Activated CD4-positive, alpha-beta memory T cell treated with anti-CD3 and anti-CD28 coated beads for 36 hours (primary cell): ENCODE measurements at regions of chr2 and their contacts with region 1.

Region 1: GRCh38 chr2:232327105-232328041 is 51.2 kb upstream of the ALPP start:
- DNase-seq: peak; percentile 90
- H3K4me3 Mint-ChIP-seq: no peak overlapping the region
- H3K27ac Mint-ChIP-seq: no peak overlapping the region
- H3K4me1 Mint-ChIP-seq: peaks cover 9% of the 10 kb centered on the region
- H3K27me3 Mint-ChIP-seq: no peaks in the 10 kb centered on the region

Region 2: DNA sequence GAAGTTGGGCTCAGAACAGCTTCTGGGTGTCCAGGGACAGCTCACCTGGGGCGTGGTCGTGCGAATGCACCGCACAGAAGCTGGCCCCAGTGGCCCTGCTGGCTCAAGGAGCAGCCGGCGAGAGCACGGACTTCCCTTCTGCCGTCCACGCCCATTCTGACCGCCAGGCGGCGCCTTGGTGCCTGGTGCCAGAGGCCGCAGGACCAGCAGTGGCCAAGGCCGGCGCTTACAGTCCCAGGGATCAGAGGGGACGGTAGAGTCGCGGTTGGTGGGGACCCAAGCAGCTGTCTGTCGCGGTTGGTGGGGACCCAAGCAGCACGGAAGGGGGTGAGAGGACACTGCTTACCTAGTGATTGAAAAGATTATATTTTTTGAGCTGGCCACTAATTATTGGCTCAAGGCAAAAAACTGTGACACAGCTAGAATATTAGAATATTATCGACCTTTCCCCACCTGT is 426.9 kb before region 1 on chr2:
- CTCF ChIA-PET with region 1: interaction called, 15 read pairs
- POLR2A ChIA-PET with region 1: no interaction called
- intact Hi-C with region 1: no loop called
- DNase-seq: peak; percentile 70
- H3K4me3 Mint-ChIP-seq: no peak overlapping the region
- H3K27ac Mint-ChIP-seq: no peak overlapping the region
- H3K4me1 Mint-ChIP-seq: no peaks in the 10 kb centered on the region
- H3K27me3 Mint-ChIP-seq: peaks cover 3% of the 10 kb centered on the region

Region 3: DNA sequence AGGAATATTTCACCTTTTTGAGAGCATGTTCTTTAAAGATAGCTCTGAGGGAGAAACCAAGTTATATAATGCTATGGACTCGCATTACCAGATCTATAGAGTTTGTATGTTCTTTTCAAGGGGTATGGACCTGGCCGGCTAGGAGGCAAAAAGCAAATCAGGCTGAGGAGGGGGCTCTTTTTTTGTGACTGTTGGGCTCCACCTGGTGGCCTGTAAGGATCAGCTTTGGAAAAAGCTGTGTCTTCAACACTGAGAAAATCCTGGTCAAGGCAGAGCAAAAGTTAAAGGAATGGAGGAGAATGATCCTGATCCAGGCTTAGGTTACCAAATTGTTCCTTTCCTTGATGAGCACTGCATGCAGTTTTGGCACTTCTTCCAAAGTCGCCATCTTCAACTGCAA is 185.3 kb before region 1 on chr2:
- CTCF ChIA-PET with region 1: interaction called, 4 read pairs
- POLR2A ChIA-PET with region 1: no interaction called
- intact Hi-C with region 1: loop called (anchors 1 kb)
- DNase-seq: peak; percentile 50
- H3K4me3 Mint-ChIP-seq: no peak overlapping the region
- H3K27ac Mint-ChIP-seq: no peak overlapping the region
- H3K4me1 Mint-ChIP-seq: peaks cover 19% of the 10 kb centered on the region
- H3K27me3 Mint-ChIP-seq: no peaks in the 10 kb centered on the region

Region 4: GRCh38 chr2:232310121-232310520 is 17.3 kb before region 1 on chr2:
- CTCF ChIA-PET with region 1: interaction called, 22 read pairs
- POLR2A ChIA-PET with region 1: no interaction called
- intact Hi-C with region 1: no loop called
- DNase-seq: peak; percentile 70
- H3K4me3 Mint-ChIP-seq: no peak overlapping the region
- H3K27ac Mint-ChIP-seq: peak overlapping the region; percentile 72
- H3K4me1 Mint-ChIP-seq: peaks cover 48% of the 10 kb centered on the region
- H3K27me3 Mint-ChIP-seq: no peaks in the 10 kb centered on the region

Region 5: GRCh38 chr2:232438951-232439757 is 111.8 kb after region 1 on chr2:
- CTCF ChIA-PET with region 1: interaction called, 12 read pairs
- POLR2A ChIA-PET with region 1: no interaction called
- intact Hi-C with region 1: no loop called
- DNase-seq: peak; percentile 55
- H3K4me3 Mint-ChIP-seq: no peak overlapping the region
- H3K27ac Mint-ChIP-seq: no peak overlapping the region
- H3K4me1 Mint-ChIP-seq: no peaks in the 10 kb centered on the region
- H3K27me3 Mint-ChIP-seq: no peaks in the 10 kb centered on the region